Right lobe of liver (tissue), 6 donors: ENCODE measurements at regions of chr17 and their contacts with region 1.

Region 1: DNA sequence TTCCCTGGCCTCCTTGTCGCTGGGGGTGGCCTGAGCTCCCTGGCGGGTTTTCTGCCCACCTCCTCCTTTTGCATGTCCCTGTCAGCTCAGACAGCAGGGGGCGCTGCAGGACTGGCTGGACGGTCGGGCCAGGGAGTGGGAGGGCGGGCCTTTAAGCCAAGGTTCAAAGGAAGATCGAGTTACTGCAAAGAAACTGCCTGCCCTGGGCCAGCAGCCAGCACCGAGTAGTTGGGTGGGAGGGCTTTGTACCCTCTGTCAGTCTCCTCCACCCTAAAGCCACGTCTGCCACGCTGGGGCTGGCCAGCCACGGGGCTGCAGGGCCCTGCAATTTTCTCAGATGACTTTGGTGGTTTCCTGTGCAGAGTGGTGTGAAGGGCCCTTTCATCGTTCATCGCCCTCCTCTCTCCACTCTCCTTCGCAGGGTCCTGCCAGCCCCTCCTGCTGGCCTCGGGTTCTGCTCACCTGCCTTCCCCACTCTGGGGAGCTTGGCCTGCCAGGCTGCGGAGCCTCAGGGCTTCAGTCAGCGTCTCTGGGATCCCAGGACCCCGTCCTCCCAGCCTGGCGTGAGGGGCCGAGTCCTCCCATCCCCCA is 12.3 kb downstream of the GPR142 start:
- DNase-seq: peak; percentile 93 to 94 (median 94)
- ATAC-seq: peak; percentile 92 to 98 (median 96)
- H3K4me3 ChIP-seq: no peak overlapping the region
- H3K27ac ChIP-seq: no peak overlapping the region
- H3K4me1 ChIP-seq: peaks cover 0 to 12% (median 4%) of the 10 kb centered on the region in 4 donors
- H3K27me3 ChIP-seq: no peaks in the 10 kb centered on the region
- CTCF ChIP-seq: peak; percentile 94 to 98 (median 96)
- POLR2A ChIP-seq: no peak

Region 2: GRCh38 chr17:74457146-74457819 is 77.7 kb after region 1 on chr17:
- intact Hi-C with region 1: loop called (anchors 2 to 5 kb)
- DNase-seq: peak; percentile 73 to 81 (median 78)
- ATAC-seq: peak in 2 of 4 donors; percentile 21 to 24
- H3K4me3 ChIP-seq: no peak overlapping the region
- H3K27ac ChIP-seq: no peak overlapping the region
- H3K4me1 ChIP-seq: peaks cover 0 to 33% (median 12%) of the 10 kb centered on the region in 4 donors
- H3K27me3 ChIP-seq: no peaks in the 10 kb centered on the region
- CTCF ChIP-seq: peak; percentile 90 to 98 (median 91)
- POLR2A ChIP-seq: no peak